Aorta (tissue), 5 donors: ENCODE measurements at regions of chr9 and their contacts with region 1.

Region 1: DNA sequence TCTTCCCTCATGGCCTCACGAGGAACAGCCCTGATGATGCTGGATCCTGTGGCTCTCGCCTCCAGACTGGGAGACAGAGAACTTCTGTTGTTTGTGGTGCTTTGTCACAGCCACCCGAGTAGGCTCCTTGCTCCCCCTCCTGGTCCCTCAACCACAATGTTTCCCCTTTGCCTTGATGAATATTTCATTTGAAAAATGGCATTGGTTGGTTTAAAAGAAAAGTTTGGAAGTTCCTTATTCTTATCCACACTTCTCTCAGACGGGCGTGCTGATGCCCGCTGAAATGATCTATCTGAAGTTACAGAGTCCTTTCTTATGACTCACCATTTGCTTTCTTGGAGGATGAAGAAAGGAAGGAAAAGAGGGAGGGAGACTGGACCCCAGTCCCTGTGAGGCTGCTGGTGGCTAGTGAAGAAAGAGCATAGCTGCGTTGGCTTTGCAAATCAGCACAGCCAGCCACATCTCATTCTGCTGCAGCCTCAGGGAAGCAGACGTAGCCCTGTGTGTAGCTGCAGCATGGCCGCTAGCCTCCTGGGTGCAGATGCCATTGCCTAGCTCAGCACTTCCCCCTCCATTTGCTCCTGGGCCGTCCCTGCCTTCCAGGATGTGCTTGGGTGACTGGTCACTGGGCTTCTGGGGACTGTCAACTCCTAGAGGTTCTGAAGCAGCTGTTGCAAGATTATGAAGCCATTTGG is 185.9 kb downstream of the ERCC6L2 start:
- DNase-seq: peak in 1 of 2 donors; percentile 80
- ATAC-seq: peak; percentile 75
- H3K4me3 ChIP-seq: no peak overlapping the region
- H3K27ac ChIP-seq: no peak overlapping the region
- H3K4me1 ChIP-seq: no peaks in the 10 kb centered on the region
- H3K27me3 ChIP-seq: no peaks in the 10 kb centered on the region

Region 2: DNA sequence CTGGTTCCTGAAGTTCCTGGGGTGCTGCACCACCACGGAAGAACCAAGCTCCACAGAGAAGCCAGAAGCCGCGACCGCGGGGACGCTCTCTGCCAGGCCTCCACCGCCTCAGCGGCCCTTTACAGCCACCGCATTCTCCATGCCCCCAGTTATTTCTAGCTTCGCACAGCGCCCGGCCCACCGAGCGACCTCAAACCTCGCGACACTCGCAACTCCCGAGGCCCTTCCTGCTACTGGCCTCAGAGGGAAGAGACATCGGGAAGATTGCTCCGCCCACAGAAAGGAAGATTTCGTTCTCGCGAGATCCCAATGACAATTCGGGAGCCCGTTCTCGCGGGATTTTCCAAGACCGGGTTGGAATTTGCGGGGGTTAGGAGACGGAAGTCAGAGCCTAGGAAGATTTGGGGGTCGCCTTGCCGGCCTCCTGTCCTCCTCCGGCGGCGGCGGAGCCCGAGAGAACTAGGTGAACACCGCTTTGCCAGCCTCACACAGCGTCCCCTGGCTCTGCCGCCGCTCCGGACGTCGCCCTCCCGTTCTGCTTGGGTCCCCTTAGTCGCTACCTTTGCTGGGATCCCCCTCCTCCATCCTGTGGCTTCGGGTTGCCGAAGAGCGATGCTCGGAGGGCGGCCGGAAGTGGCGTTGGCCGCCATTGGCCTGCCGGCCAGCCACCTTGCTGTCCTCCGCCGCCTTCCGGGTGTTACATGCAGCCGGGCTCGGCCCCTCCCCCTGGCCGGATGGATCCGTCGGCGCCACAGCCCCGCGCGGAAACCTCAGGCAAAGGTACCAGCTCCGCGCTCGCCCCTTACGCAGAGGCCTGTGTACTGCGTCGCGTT is 185.9 kb before region 1 on chr9 and contains the start of gene ERCC6L2:
- intact Hi-C with region 1: loop called (anchors 10 kb)
- DNase-seq: peak; percentile 96 to 98
- ATAC-seq: peak; percentile 99
- H3K4me3 ChIP-seq: peak within 1 kb of the TSS; percentile 62 to 80
- H3K27ac ChIP-seq: peak within 1 kb of the TSS; percentile 96 to 99
- H3K4me1 ChIP-seq: peaks cover 0 to 3% of the 10 kb centered on the region in 2 donors
- H3K27me3 ChIP-seq: no peaks in the 10 kb centered on the region
- total RNA-seq, gene ERCC6L2: 46.4 to 54.5 TPM

Region 3: DNA sequence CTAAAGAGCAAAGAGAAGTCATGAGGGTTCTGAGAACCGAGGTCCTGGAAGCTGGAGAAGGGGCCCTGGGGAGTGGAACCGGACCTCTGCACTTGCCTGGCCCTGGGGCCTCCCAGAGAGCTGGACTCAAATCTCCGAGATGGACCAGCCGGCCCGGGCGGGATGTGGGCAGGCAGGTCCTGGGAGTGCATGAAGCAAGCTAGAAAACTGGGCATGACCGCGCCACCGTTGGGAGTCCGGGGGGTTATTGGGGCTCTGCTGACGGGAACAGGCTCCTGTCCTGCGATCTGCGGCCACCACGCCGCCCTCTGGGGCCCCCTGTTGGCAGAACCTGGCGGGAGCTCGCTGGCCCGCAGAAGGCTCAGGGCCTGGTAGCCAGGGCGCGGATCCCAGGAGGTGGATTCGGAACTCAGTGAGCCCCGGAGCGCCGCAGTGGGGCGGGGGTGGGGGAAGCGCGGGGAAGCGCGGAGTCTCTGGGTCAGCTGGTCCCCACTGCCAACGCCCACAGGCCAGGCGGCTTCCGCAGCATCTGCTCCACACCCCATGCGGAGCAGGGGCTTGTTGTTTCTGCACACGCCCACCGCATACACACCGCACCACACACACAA is 35.3 kb before region 1 on chr9:
- intact Hi-C with region 1: loop called in 1 of 2 experiments (anchors 5 kb)
- DNase-seq: no peak
- ATAC-seq: no peak
- H3K4me3 ChIP-seq: no peak overlapping the region
- H3K27ac ChIP-seq: no peak overlapping the region
- H3K4me1 ChIP-seq: peaks cover 0 to 5% of the 10 kb centered on the region in 2 donors
- H3K27me3 ChIP-seq: peaks cover 0 to 3% of the 10 kb centered on the region in 2 donors